ENCODE measurements at regions of chr4 and their contacts with region 1.

Region 1: DNA sequence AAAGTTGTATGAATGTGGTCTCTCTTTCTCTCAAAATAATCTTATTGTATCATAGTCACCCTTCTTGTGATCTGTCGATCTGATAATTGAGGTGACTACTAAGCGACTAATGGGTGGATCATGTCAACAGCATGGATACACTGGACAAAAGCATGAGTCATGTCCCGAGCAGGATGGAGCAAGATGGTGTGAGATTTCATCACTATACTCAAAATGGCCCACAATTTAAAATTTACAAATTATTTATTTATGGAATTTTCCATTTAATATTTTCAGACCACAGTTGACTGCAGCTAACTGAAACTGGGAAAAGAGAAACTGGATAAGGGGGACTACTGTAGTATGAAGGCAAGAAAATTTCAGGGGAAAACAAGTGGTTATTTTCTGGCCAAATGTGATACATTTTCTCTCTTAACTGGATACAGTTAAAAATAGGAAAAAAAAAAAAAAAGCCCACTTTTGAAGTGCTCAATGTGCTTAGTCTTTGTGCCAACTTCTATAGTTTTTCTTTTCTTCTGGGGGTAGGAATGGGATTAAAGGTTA is 25.3 kb downstream of the FAM241A start:
- DNase-seq: peak; percentile 34
- ATAC-seq: peak; percentile 63
- H3K4me3 Mint-ChIP-seq: no peak overlapping the region
- H3K27ac Mint-ChIP-seq: peak overlapping the region; percentile 67
- H3K4me1 Mint-ChIP-seq: peaks cover 43% of the 10 kb centered on the region
- H3K27me3 Mint-ChIP-seq: no peaks in the 10 kb centered on the region
- CTCF ChIP-seq: no peak

Region 2: DNA sequence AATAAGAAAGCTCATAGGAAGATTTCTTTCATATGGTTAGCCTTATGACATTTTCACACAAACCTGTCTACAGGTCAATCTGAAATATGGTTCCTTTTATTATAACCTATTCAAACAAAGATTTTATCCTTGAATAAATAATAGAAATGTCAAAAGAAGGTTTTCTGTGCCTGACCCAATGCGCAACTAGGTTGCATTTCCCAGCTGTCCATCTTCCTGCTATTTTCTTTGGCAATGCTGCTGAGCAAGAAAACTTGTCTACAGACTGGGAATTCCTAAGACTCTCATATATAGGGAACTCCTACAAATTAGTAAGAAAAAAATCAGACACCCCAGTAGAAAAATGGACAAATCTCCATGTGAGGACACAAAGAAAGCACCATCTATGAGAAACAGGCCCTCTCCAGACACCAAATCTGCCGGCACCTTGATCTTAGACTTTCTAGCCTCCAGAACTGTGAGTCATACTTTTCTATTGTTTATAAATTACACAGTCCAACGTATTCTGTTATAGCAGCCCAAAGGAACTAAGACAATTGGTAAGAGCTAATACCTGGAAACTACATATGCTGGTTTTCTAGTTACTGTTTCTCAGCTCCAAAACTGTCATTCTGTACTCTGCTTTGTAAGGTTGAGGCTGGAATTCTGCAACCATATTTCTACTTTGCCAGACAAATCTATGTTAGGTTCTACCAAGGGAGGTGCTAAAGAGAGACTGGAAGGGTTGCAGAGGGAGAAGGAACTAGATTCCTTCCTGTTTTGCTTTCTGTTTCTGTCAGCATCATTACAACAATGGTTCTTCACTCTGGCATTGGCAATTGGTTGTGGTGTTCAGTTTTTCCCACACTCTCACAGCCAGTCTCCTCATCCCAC is 61.1 kb before region 1 on chr4:
- CTCF ChIA-PET with region 1: interaction called, 6 read pairs
- POLR2A ChIA-PET with region 1: no interaction called
- intact Hi-C with region 1: loop called (anchors 10 kb)
- DNase-seq: no peak
- ATAC-seq: peak; percentile 49
- H3K4me3 Mint-ChIP-seq: no peak overlapping the region
- H3K27ac Mint-ChIP-seq: no peak overlapping the region
- H3K4me1 Mint-ChIP-seq: peaks cover 9% of the 10 kb centered on the region
- H3K27me3 Mint-ChIP-seq: no peaks in the 10 kb centered on the region
- CTCF ChIP-seq: no peak

Region 3: DNA sequence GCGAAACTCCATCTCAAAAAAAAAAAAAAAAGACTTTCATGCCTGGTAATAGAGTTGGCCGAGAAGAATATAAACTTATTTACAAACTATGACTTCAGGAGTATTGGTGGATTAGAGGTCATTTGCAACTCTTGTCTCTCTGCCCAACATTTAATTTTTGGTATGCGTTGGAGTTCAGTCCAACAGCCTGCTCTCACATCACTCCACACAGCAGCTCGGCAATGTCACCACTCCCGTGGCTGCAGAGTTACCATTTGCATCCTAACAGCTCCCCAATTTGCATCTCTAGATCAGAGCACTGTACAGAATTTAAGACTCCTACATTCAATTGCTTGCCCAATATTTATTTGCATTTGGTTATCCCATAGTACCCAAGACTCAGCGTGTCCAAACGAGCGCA is 20.2 kb after region 1 on chr4:
- CTCF ChIA-PET with region 1: no interaction called
- POLR2A ChIA-PET with region 1: no interaction called
- intact Hi-C with region 1: no loop called
- DNase-seq: no peak
- ATAC-seq: no peak
- H3K4me3 Mint-ChIP-seq: no peak overlapping the region
- H3K27ac Mint-ChIP-seq: no peak overlapping the region
- H3K4me1 Mint-ChIP-seq: no peaks in the 10 kb centered on the region
- H3K27me3 Mint-ChIP-seq: no peaks in the 10 kb centered on the region
- CTCF ChIP-seq: no peak